Naive thymus-derived CD4-positive, alpha-beta T cell (primary cell): ENCODE measurements at regions of chr18 and their contacts with region 1.

Region 1: DNA sequence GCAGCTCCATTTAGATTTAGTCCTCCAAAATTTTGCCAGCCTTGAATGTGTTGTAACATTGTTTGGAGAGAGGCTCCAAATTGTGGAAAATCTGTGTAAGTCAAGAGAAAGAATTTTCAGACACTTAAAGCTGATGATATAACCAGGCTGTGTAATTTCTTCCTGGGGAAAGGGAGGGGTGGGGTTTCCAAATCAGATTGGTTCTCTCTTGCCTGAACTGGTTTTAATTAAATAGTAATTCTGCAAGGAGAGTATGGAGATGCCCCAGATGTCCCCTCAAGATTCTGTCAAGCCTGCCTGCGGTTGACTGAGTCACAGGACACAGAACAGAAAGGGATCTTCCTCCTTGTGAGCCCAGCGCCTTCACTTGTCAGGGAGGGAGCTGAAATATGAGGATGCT is 54.5 kb downstream of the C18orf63 start:
- DNase-seq: no peak
- ATAC-seq: no peak
- H3K4me3 ChIP-seq: no peak overlapping the region
- H3K4me3 Mint-ChIP-seq: peak overlapping the region in 3 of 10 donors; percentile 8 to 30 (median 30)
- H3K27ac ChIP-seq: no peak overlapping the region
- H3K27ac Mint-ChIP-seq: peak overlapping the region in 3 of 9 donors; percentile 42 to 88 (median 55)
- H3K4me1 ChIP-seq: peaks cover 22 to 54% of the 10 kb centered on the region in 2 donors
- H3K4me1 Mint-ChIP-seq: peaks cover 26 to 72% (median 54%) of the 10 kb centered on the region in 7 donors
- H3K27me3 ChIP-seq: peaks cover 0 to 6% of the 10 kb centered on the region in 2 donors
- H3K27me3 Mint-ChIP-seq: peaks cover 0 to 28% (median 0%) of the 10 kb centered on the region in 5 donors

Region 2: GRCh38 chr18:72762515-72763122 is 1607.5 kb before region 1 on chr18:
- CTCF ChIA-PET with region 1: no interaction called
- POLR2A ChIA-PET with region 1: no interaction called
- intact Hi-C with region 1: no loop called
- DNase-seq: peak in 4 of 9 donors; percentile 2 to 26 (median 12)
- ATAC-seq: no peak
- H3K4me3 ChIP-seq: no peak overlapping the region
- H3K4me3 Mint-ChIP-seq: no peak overlapping the region
- H3K27ac ChIP-seq: no peak overlapping the region
- H3K27ac Mint-ChIP-seq: no peak overlapping the region
- H3K4me1 ChIP-seq: no peaks in the 10 kb centered on the region
- H3K4me1 Mint-ChIP-seq: no peaks in the 10 kb centered on the region
- H3K27me3 ChIP-seq: no peaks in the 10 kb centered on the region
- H3K27me3 Mint-ChIP-seq: peaks cover 0 to 5% (median 0%) of the 10 kb centered on the region in 5 donors

Region 3: DNA sequence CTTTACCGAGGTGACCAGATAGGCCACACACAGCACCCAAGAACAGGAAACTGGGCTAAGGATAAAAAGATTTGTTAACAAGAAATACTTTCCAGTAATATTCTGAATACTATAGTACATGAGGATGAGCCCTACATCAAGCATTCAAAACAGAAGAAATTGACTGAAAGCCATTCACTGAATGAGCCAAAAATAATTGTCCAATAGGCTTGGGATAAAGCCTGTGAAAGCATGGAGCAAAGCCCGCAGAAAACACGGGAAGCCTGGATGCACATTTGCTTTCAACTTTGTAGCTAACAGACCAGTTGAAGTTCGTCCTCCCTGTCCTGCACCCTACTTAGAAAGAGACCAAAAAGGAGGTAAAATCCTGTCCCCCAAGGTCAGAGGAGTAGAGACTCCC is 30.7 kb after region 1 on chr18:
- CTCF ChIA-PET with region 1: no interaction called
- POLR2A ChIA-PET with region 1: interaction called, 10 read pairs
- intact Hi-C with region 1: no loop called
- DNase-seq: no peak
- ATAC-seq: no peak
- H3K4me3 ChIP-seq: no peak overlapping the region
- H3K4me3 Mint-ChIP-seq: no peak overlapping the region
- H3K27ac ChIP-seq: no peak overlapping the region
- H3K27ac Mint-ChIP-seq: no peak overlapping the region
- H3K4me1 ChIP-seq: peaks cover 0 to 4% of the 10 kb centered on the region in 2 donors
- H3K4me1 Mint-ChIP-seq: peaks cover 11 to 29% (median 16%) of the 10 kb centered on the region in 7 donors
- H3K27me3 ChIP-seq: no peaks in the 10 kb centered on the region
- H3K27me3 Mint-ChIP-seq: peaks cover 0 to 21% (median 0%) of the 10 kb centered on the region in 5 donors

Region 4: GRCh38 chr18:74407888-74408287 is 37.8 kb after region 1 on chr18:
- CTCF ChIA-PET with region 1: no interaction called
- POLR2A ChIA-PET with region 1: interaction called, 5 read pairs
- intact Hi-C with region 1: loop called (anchors 1 kb)
- DNase-seq: peak in 4 of 9 donors; percentile 12 to 28 (median 13)
- ATAC-seq: peak; percentile 41
- H3K4me3 ChIP-seq: peak overlapping the region; percentile 35
- H3K4me3 Mint-ChIP-seq: peak overlapping the region; percentile 71 to 93 (median 84)
- H3K27ac ChIP-seq: peak overlapping the region; percentile 70
- H3K27ac Mint-ChIP-seq: peak overlapping the region; percentile 92 to 99 (median 96)
- H3K4me1 ChIP-seq: peaks cover 5 to 19% of the 10 kb centered on the region in 2 donors
- H3K4me1 Mint-ChIP-seq: peaks cover 15 to 45% (median 37%) of the 10 kb centered on the region in 7 donors
- H3K27me3 ChIP-seq: no peaks in the 10 kb centered on the region
- H3K27me3 Mint-ChIP-seq: peaks cover 0 to 5% (median 0%) of the 10 kb centered on the region in 5 donors

Region 5: GRCh38 chr18:74597662-74598349 is 227.7 kb after region 1 on chr18 and contains the start of gene ZNF407:
- CTCF ChIA-PET with region 1: no interaction called
- POLR2A ChIA-PET with region 1: interaction called, 4 read pairs
- intact Hi-C with region 1: loop called (anchors 1 to 5 kb)
- DNase-seq: peak; percentile 77 to 94 (median 90)
- ATAC-seq: peak; percentile 84
- H3K4me3 ChIP-seq: peak within 1 kb of the TSS; percentile 100
- H3K4me3 Mint-ChIP-seq: peak within 1 kb of the TSS; percentile 89 to 96 (median 95)
- H3K27ac ChIP-seq: peak within 1 kb of the TSS; percentile 88
- H3K27ac Mint-ChIP-seq: peak within 1 kb of the TSS; percentile 95 to 99 (median 98)
- H3K4me1 ChIP-seq: peaks cover 26 to 27% of the 10 kb centered on the region in 2 donors
- H3K4me1 Mint-ChIP-seq: peaks cover 33 to 74% (median 61%) of the 10 kb centered on the region in 7 donors
- H3K27me3 ChIP-seq: no peaks in the 10 kb centered on the region
- H3K27me3 Mint-ChIP-seq: no peaks in the 10 kb centered on the region
- total RNA-seq, gene ZNF407: 23.1 to 31.3 (median 29.7) TPM